ENCODE measurements at regions of chr13 and their contacts with region 1.

Region 1: DNA sequence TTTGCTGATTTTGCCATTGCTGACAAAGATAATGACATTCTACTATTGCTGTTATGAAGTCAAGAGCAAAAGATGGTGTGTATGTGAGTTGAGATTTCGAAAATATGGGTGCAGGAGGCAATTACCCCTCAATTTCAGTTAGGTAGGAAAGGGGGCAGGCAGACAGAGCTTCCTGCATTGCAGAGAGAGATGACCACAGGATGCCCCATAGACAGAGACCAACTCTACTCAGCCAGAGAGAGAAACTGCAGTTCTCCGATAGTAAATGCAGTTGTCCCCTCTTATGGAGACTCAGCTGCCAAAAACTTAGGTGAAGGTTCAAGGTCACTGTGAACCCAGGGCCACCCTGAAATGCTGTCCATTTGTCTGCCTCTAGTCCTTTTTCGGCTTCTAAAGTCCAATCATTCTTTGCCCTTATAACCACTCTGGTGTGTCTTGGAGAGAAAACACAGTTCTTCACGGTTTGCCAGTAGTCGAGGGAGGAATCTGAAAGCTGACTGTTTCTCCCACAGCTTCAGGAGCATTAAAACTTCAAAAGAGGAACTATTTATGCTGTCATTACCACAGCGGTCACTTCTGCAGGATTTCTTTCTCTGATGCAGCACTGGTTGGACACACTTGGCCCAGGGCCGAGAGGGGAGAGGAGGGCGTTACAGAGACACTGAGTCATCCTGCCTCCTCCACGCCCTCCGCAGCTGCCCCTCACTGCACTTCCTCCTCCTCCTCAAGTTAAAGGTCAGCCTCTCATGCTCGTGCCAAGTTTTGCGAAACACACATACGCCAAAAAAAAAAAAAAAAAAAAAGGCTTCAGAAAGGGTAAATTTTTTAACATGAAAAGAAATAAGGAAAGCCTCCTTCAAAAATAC is 264.3 kb downstream of the FOXO1 start:
- DNase-seq: peak; percentile 89
- H3K4me3 ChIP-seq: no peak overlapping the region
- H3K27ac ChIP-seq: no peak overlapping the region
- H3K4me1 ChIP-seq: peaks cover 24% of the 10 kb centered on the region
- H3K27me3 ChIP-seq: no peaks in the 10 kb centered on the region
- CTCF ChIP-seq: no peak

Region 2: DNA sequence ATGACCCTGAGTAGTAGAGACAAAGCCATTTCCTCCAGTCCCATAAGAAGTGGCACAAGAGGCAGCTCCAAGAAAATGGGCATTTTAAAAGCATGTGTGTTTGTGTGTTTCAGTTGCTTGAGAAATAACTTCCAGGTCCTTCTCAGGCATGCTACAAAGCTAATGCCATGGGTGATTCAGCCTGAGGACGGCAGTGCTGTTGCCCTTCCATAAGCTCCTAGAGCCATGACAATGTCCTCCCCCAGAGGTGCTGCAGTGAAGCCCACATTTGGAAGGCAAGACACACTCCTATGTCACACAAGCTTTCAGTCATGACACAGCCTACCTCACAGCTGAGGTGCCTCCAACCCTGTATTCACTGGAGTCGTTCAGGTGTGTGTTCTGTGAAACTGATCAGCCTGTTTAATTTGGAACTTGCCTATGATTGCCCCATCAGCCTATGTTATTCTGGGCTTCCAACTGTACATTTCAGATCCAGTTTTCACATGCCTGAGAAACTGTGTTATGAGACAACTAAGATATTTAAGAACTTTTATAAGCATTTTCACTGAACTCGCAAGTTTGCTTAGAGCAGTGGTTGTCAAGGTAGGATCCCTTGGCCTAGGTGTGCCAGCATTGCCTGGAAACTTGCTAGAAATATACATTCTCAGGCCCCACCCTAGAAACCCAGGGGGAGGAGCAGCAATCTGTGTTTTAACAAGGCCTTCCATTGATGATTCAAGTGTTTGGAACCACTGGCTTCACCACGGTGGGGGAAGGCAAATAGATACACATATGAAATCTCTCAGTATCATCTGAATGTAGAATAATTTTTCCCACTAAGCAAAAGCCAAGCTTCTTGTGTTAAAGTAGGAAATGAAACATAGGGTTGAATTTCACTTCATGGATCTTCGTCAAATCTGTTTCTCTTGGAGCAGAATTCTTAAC is 50.9 kb after region 1 on chr13:
- CTCF ChIA-PET with region 1: no interaction called
- dilution Hi-C with region 1: loop called (anchors 5 kb)
- in situ Hi-C with region 1: no loop called
- intact Hi-C with region 1: loop called (anchors 5 kb)
- DNase-seq: peak; percentile 97
- H3K4me3 ChIP-seq: no peak overlapping the region
- H3K27ac ChIP-seq: peak overlapping the region; percentile 89
- H3K4me1 ChIP-seq: peaks cover 14% of the 10 kb centered on the region
- H3K27me3 ChIP-seq: no peaks in the 10 kb centered on the region
- CTCF ChIP-seq: no peak

Measured in mammary epithelial cell (primary cell).